AG04449 (cell line): ENCODE measurements at regions of chr2 and their contacts with region 1.

Region 1: GRCh38 chr2:182730486-182730885 is 14.4 kb downstream of the DNAJC10 start:
- DNase-seq: no peak
- H3K4me3 ChIP-seq: no peak overlapping the region
- CTCF ChIP-seq: no peak

Region 2: DNA sequence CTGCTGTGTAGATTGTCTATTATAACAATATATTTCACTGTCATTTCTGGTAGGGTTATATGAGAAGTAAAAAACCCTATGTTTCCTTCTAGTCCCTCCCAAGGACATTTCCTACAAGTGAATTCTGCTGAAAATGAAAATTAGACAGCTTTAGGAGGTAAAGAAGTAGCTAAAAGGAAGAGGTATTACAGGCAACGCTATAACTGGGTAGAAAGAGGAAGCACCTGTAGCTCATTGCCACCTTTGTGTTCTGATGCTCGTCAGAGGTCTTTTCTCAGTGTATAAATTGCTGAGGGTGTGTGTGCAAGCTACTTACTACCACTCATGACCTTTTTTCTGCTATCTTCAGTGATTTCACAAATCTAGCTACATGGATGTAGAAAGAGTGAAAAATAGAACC is 13.1 kb before region 1 on chr2:
- CTCF ChIA-PET with region 1: interaction called, 10 read pairs
- POLR2A ChIA-PET with region 1: no interaction called
- DNase-seq: no peak
- H3K4me3 ChIP-seq: peak overlapping the region; percentile 13; the same call in 1 of the 2 replicates
- CTCF ChIP-seq: no peak